AG04450 (cell line): ENCODE measurements at regions of chr12 and their contacts with region 1.

Region 1: GRCh38 chr12:32312049-32312670 is 87.2 kb upstream of the FGD4 start:
- DNase-seq: peak; percentile 46
- H3K4me3 ChIP-seq: no peak overlapping the region
- H3K27ac ChIP-seq: no peak overlapping the region
- H3K27me3 ChIP-seq: no peaks in the 10 kb centered on the region
- CTCF ChIP-seq: peak; percentile 64

Region 2: DNA sequence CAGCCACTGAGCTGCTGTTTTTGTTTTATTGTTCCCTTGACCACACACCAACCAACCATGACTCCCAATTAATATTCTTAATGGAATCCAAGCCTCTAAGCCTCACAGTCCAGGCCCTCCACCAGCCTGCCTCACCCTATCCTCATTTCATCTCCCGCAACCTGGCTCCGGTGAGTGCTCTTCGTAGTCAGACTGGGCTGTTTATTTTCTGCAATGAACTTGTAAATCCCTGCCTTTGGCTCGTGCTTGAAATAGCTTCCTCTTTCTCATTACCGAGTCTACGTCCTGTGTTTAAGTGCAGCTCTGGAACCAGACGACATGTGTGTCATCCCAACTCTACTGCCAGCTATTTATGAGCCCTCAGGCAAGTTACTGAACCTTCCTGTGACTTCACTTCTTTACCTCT is 665.1 kb before region 1 on chr12:
- CTCF ChIA-PET with region 1: interaction called, 44 read pairs
- POLR2A ChIA-PET with region 1: no interaction called
- DNase-seq: no peak
- H3K4me3 ChIP-seq: no peak overlapping the region
- H3K27ac ChIP-seq: no peak overlapping the region
- H3K27me3 ChIP-seq: no peaks in the 10 kb centered on the region
- CTCF ChIP-seq: no peak

Region 3: DNA sequence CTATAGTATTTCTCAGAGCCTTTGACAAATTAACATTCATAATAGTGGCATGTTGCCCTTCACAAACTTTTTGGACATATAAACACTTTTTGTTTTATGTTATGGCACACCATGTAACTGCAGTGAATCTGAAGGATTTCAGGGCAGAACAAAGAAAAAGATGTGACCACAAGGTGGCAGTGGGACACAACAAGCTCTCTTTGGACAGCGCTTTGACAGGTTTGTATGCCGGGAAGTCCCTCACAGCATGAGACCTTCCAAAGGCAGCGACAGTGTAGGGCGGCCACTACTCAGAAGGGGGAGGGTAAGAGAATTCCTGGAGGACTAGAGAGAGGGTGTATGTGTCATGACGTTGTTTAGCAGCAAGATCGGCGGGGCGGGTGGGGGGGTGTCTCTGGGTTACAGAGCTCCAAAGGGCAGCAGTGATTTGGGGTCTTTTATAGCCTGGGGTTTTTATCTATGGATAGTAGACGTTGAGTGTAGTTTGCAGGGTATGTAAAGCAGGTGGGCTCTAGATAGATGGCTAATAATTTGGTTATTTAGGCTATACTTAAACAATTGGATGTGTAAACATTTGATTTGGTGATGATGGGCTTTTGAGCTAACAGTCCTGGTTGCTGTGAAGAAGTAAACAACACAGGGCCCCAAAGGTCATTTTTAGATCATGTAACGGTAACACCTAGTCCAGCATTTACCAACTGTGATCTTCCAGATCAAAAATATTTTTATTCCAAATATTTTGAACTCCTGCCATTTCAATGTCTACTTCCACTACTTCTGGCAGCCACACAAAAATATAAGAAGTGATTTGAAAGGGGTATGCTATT is 629.8 kb before region 1 on chr12:
- CTCF ChIA-PET with region 1: interaction called, 17 read pairs
- POLR2A ChIA-PET with region 1: no interaction called
- DNase-seq: peak; percentile 42
- H3K4me3 ChIP-seq: no peak overlapping the region
- H3K27ac ChIP-seq: no peak overlapping the region
- H3K27me3 ChIP-seq: no peaks in the 10 kb centered on the region
- CTCF ChIP-seq: peak; percentile 69

Region 4: GRCh38 chr12:32290411-32290810 is 21.7 kb before region 1 on chr12:
- CTCF ChIA-PET with region 1: interaction called, 13 read pairs
- POLR2A ChIA-PET with region 1: no interaction called
- DNase-seq: no peak
- H3K4me3 ChIP-seq: no peak overlapping the region
- H3K27ac ChIP-seq: no peak overlapping the region
- H3K27me3 ChIP-seq: no peaks in the 10 kb centered on the region
- CTCF ChIP-seq: no peak

Region 5: GRCh38 chr12:32322354-32322753 is 10.2 kb after region 1 on chr12:
- CTCF ChIA-PET with region 1: interaction called, 29 read pairs
- POLR2A ChIA-PET with region 1: no interaction called
- DNase-seq: no peak
- H3K4me3 ChIP-seq: no peak overlapping the region
- H3K27ac ChIP-seq: no peak overlapping the region
- H3K27me3 ChIP-seq: no peaks in the 10 kb centered on the region
- CTCF ChIP-seq: no peak